CD4-positive, alpha-beta T cell (primary cell): ENCODE measurements at regions of chr7 and their contacts with region 1.

Region 1: DNA sequence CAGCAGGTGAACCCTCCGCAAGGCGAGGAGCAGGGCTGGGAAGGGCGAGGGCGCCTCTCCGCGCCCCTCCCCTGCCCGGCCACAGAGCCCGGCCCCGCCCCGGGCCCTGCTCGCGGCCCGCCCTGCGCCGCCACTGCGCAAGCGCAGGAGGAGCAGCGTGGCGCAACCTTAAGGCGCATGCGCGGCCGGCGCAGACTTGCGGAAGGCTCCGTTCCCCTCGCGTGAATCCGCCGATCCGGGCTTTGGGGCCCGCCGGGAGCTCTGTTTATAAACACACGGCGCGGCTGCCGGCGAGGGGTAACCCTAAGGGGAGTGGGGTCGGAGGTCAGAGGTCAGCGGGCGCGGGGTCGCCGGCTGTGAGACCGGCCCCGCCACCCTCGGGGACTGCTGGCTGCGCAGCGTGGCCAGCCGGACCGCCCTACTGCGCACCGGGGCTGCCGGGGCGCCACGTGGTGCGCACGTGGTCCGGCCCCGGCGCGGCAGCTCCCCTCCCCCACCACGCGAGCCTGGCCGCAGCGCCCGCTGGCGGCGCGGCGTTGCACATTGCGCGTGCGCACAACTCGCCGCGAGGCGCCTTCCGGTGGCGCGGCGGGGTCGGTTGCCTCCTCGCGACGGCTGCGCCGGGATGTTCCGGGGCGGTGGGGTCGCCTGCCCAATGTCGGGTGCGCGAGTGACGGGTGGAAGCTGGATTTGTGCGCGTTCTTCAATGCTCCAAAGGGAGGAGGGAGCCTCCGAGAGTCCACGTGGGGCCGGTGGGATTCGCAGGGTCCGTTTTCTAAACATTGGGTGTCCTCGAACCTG is 40.2 kb upstream of the FOXK1 start:
- DNase-seq: peak; percentile 94 to 99 (median 96)
- ATAC-seq: peak; percentile 87
- H3K4me3 ChIP-seq: peak overlapping the region; percentile 74
- H3K4me3 Mint-ChIP-seq: peak overlapping the region; percentile 91
- H3K27ac ChIP-seq: peak overlapping the region; percentile 86 to 89
- H3K27ac Mint-ChIP-seq: peak overlapping the region; percentile 97
- H3K4me1 ChIP-seq: peaks cover 25% of the 10 kb centered on the region
- H3K4me1 Mint-ChIP-seq: peaks cover 16% of the 10 kb centered on the region
- H3K27me3 ChIP-seq: no peaks in the 10 kb centered on the region
- H3K27me3 Mint-ChIP-seq: no peaks in the 10 kb centered on the region
- CTCF ChIP-seq: peak; percentile 20

Region 2: GRCh38 chr7:4549681-4550080 is 92.2 kb before region 1 on chr7:
- CTCF ChIA-PET with region 1: no interaction called
- POLR2A ChIA-PET with region 1: no interaction called
- intact Hi-C with region 1: no loop called
- DNase-seq: no peak
- ATAC-seq: no peak
- H3K4me3 ChIP-seq: no peak overlapping the region
- H3K4me3 Mint-ChIP-seq: no peak overlapping the region
- H3K27ac ChIP-seq: no peak overlapping the region
- H3K27ac Mint-ChIP-seq: no peak overlapping the region
- H3K4me1 ChIP-seq: no peaks in the 10 kb centered on the region
- H3K4me1 Mint-ChIP-seq: no peaks in the 10 kb centered on the region
- H3K27me3 ChIP-seq: no peaks in the 10 kb centered on the region
- H3K27me3 Mint-ChIP-seq: peaks cover 30% of the 10 kb centered on the region
- CTCF ChIP-seq: no peak

Region 3: GRCh38 chr7:4610768-4611467 is 30.9 kb before region 1 on chr7:
- CTCF ChIA-PET with region 1: no interaction called
- POLR2A ChIA-PET with region 1: interaction called, 3 read pairs
- intact Hi-C with region 1: loop called in 1 of 2 experiments (anchors 2 kb)
- DNase-seq: peak; percentile 23 to 84 (median 40)
- ATAC-seq: peak; percentile 91
- H3K4me3 ChIP-seq: no peak overlapping the region
- H3K4me3 Mint-ChIP-seq: no peak overlapping the region
- H3K27ac ChIP-seq: no peak overlapping the region
- H3K27ac Mint-ChIP-seq: no peak overlapping the region
- H3K4me1 ChIP-seq: peaks cover 12% of the 10 kb centered on the region
- H3K4me1 Mint-ChIP-seq: peaks cover 20% of the 10 kb centered on the region
- H3K27me3 ChIP-seq: no peaks in the 10 kb centered on the region
- H3K27me3 Mint-ChIP-seq: peaks cover 4% of the 10 kb centered on the region
- CTCF ChIP-seq: peak; percentile 84

Region 4: GRCh38 chr7:4681886-4682620 is 40.2 kb after region 1 on chr7 and contains the start of gene FOXK1:
- CTCF ChIA-PET with region 1: interaction called, 16 read pairs
- POLR2A ChIA-PET with region 1: interaction called, 141 read pairs
- intact Hi-C with region 1: loop called (anchors 1 kb)
- DNase-seq: peak; percentile 54 to 93 (median 79)
- ATAC-seq: peak; percentile 77
- H3K4me3 ChIP-seq: peak within 1 kb of the TSS; percentile 63
- H3K4me3 Mint-ChIP-seq: peak within 1 kb of the TSS; percentile 97
- H3K27ac ChIP-seq: peak within 1 kb of the TSS; percentile 88 to 94
- H3K27ac Mint-ChIP-seq: peak within 1 kb of the TSS; percentile 98
- H3K4me1 ChIP-seq: peaks cover 44% of the 10 kb centered on the region
- H3K4me1 Mint-ChIP-seq: peaks cover 33% of the 10 kb centered on the region
- H3K27me3 ChIP-seq: no peaks in the 10 kb centered on the region
- H3K27me3 Mint-ChIP-seq: no peaks in the 10 kb centered on the region
- CTCF ChIP-seq: no peak
- total RNA-seq, gene FOXK1: 67.8 to 68.1 TPM

Region 5: DNA sequence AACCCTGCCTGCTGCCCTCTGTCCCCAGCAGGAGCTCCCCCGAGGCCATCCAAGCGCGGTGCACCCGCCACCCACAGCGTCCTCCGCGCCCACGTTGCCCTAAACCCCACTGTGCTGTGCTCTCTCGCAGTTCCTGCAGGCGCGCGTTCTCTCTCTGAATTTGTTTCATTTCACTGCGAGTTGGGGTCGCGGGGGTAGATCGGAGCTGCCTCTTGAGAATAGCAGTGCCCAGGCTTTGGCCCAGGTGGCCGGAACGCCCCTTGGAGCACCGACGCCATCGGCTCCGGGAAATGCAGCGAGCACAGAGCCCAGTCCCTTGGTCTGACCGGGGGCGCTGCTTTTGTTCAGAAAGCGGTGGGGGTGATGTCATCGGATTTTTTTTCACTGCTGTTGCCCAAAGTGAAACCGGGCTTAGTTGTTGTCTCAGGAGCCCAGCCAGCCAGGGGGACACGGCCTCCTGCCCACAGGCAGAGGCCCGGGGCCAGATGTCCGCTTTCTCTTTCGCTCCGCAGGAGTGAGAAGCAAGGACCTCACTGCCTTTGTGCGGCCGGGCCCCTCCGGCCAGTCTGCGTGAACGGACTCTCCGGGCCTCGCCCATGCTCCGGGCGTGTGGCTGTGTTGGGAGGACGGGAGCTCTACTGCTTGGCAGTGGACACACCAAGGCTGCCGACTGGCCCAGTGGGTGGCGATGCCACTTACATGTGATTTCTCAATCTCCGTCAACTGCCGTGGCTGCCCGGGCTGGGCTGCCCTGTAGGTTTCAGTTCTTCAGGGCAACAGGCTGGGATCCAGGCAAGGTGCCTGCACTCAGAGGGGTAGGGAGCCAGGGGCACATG is 83.4 kb after region 1 on chr7:
- CTCF ChIA-PET with region 1: interaction called, 8 read pairs
- POLR2A ChIA-PET with region 1: interaction called, 11 read pairs
- intact Hi-C with region 1: no loop called
- DNase-seq: peak in 10 of 14 experiments; percentile 22 to 77 (median 46)
- ATAC-seq: peak; percentile 83
- H3K4me3 ChIP-seq: peak overlapping the region; percentile 66
- H3K4me3 Mint-ChIP-seq: peak overlapping the region; percentile 93
- H3K27ac ChIP-seq: peak overlapping the region; percentile 48 to 54
- H3K27ac Mint-ChIP-seq: peak overlapping the region; percentile 94
- H3K4me1 ChIP-seq: peaks cover 31% of the 10 kb centered on the region
- H3K4me1 Mint-ChIP-seq: peaks cover 44% of the 10 kb centered on the region
- H3K27me3 ChIP-seq: no peaks in the 10 kb centered on the region
- H3K27me3 Mint-ChIP-seq: no peaks in the 10 kb centered on the region
- CTCF ChIP-seq: no peak

Region 6: GRCh38 chr7:4744391-4745264 is 102.8 kb after region 1 on chr7:
- CTCF ChIA-PET with region 1: interaction called, 5 read pairs
- POLR2A ChIA-PET with region 1: interaction called, 41 read pairs
- intact Hi-C with region 1: loop called (anchors 1 to 2 kb)
- DNase-seq: peak; percentile 39 to 84 (median 73)
- ATAC-seq: peak; percentile 73
- H3K4me3 ChIP-seq: peak overlapping the region; percentile 58
- H3K4me3 Mint-ChIP-seq: peak overlapping the region; percentile 90
- H3K27ac ChIP-seq: peak overlapping the region; percentile 68 to 94
- H3K27ac Mint-ChIP-seq: peak overlapping the region; percentile 93
- H3K4me1 ChIP-seq: peaks cover 69% of the 10 kb centered on the region
- H3K4me1 Mint-ChIP-seq: peaks cover 81% of the 10 kb centered on the region
- H3K27me3 ChIP-seq: no peaks in the 10 kb centered on the region
- H3K27me3 Mint-ChIP-seq: no peaks in the 10 kb centered on the region
- CTCF ChIP-seq: no peak